MCF 10A (cell line): ENCODE measurements at regions of chr6 and their contacts with region 1.

Region 1: GRCh38 chr6:6466967-6467761 is 121.4 kb upstream of the LY86 start:
- DNase-seq: peak; percentile 90
- H3K4me3 Mint-ChIP-seq: peak overlapping the region; percentile 18
- H3K27ac Mint-ChIP-seq: peak overlapping the region; percentile 96
- H3K4me1 Mint-ChIP-seq: peaks cover 49% of the 10 kb centered on the region
- H3K27me3 Mint-ChIP-seq: no peaks in the 10 kb centered on the region
- CTCF ChIP-seq: no peak

Region 2: GRCh38 chr6:6315660-6316059 is 151.5 kb before region 1 on chr6:
- CTCF ChIA-PET with region 1: no interaction called
- POLR2A ChIA-PET with region 1: no interaction called
- intact Hi-C with region 1: loop called (anchors 1 kb)
- DNase-seq: peak; percentile 56
- H3K4me3 Mint-ChIP-seq: no peak overlapping the region
- H3K27ac Mint-ChIP-seq: no peak overlapping the region
- H3K4me1 Mint-ChIP-seq: no peaks in the 10 kb centered on the region
- H3K27me3 Mint-ChIP-seq: peaks cover 21% of the 10 kb centered on the region
- CTCF ChIP-seq: peak; percentile 85

Region 3: DNA sequence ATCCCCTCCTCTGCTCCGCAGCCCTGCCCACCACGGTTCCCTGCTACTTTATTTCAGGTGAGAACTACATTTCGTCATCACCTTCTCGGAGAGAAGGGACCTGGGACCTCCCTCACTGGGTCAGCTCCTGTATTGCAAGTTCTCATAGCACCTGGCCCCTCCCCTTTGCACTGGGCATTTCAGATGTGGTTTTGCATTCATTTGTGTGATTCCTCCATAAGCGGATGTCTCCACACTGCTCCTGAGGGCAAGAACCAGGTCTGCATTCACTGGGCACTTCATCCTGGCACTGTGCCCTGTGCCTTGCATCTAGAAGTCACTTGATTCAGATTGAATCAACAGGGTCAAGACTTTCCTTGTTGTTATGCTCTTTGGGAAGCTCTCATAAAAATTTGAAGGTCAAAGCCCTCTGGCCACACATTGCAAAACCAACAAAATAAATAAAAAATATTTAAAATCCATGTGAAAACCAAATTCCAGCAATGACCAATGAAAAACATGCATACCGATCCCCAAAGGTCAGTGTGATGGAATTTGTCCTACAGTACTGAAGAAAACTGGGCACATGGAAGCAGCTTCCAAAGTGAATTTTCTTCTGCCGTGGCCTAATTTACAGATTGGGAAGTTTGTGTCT is 57.6 kb before region 1 on chr6:
- CTCF ChIA-PET with region 1: no interaction called
- POLR2A ChIA-PET with region 1: interaction called, 5 read pairs
- intact Hi-C with region 1: loop called (anchors 10 kb)
- DNase-seq: peak; percentile 57
- H3K4me3 Mint-ChIP-seq: no peak overlapping the region
- H3K27ac Mint-ChIP-seq: no peak overlapping the region
- H3K4me1 Mint-ChIP-seq: peaks cover 23% of the 10 kb centered on the region
- H3K27me3 Mint-ChIP-seq: no peaks in the 10 kb centered on the region
- CTCF ChIP-seq: no peak

Region 4: GRCh38 chr6:6438286-6438685 is 28.9 kb before region 1 on chr6:
- CTCF ChIA-PET with region 1: no interaction called
- POLR2A ChIA-PET with region 1: interaction called, 65 read pairs
- intact Hi-C with region 1: no loop called
- DNase-seq: peak; percentile 53
- H3K4me3 Mint-ChIP-seq: no peak overlapping the region
- H3K27ac Mint-ChIP-seq: peak overlapping the region; percentile 32
- H3K4me1 Mint-ChIP-seq: peaks cover 29% of the 10 kb centered on the region
- H3K27me3 Mint-ChIP-seq: no peaks in the 10 kb centered on the region
- CTCF ChIP-seq: no peak